Transverse colon (tissue), 4 donors: ENCODE measurements at regions of chr13 and their contacts with region 1.

Region 1: GRCh38 chr13:106753251-106753650 is 185.3 kb upstream of the ARGLU1 start:
- DNase-seq: no peak
- H3K4me3 ChIP-seq: no peak overlapping the region
- H3K27ac ChIP-seq: peak overlapping the region in 1 of 4 donors; percentile 8
- H3K4me1 ChIP-seq: no peaks in the 10 kb centered on the region
- H3K27me3 ChIP-seq: no peaks in the 10 kb centered on the region
- CTCF ChIP-seq: no peak
- EP300 ChIP-seq: no peak
- POLR2A ChIP-seq: no peak

Region 2: GRCh38 chr13:105502193-105502592 is 1251.1 kb before region 1 on chr13:
- in situ Hi-C with region 1: no loop called
- intact Hi-C with region 1: loop called (anchors 5 kb)
- DNase-seq: no peak
- H3K4me3 ChIP-seq: no peak overlapping the region
- H3K27ac ChIP-seq: no peak overlapping the region
- H3K4me1 ChIP-seq: no peaks in the 10 kb centered on the region
- H3K27me3 ChIP-seq: no peaks in the 10 kb centered on the region
- CTCF ChIP-seq: no peak
- EP300 ChIP-seq: no peak
- POLR2A ChIP-seq: no peak